ENCODE measurements at regions of chr6 and their contacts with region 1.

Region 1: DNA sequence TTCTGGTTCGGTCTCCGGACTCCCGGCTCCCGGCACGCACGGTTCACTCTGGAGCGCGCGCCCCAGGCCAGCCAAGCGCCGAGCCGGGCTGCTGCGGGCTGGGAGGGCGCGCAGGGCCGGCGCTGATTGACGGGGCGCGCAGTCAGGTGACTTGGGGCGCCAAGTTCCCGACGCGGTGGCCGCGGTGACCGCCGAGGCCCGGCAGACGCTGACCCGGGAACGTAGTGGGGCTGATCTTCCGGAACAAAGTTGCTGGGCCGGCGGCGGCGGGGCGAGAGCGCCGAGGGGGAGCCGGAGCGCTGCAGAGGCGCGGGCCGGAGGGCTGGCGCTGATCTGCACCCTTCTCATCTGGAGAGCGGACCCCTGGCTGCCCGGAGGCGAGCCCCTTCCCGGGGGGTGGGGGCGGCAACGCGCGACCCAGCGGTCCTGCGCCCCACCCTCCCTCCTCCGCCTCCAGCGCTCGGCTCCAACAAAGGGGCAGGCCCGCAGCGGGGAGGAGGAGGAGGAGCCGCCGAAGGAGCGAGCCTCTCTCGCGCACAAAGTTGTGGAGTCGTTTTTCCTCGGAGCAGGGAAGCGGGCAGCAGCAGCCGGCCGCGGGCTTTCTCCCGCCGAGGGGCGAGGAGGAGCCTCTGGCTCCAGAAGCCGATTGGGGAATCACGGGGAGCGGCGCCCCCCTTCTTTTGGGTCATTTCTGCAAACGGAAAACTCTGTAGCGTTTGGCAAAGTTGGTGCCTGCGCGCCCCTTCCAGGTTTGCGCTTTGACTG is at the start of gene UTRN:
- DNase-seq: peak; percentile 84
- H3K4me3 Mint-ChIP-seq: peak within 1 kb of the TSS; percentile 91
- H3K27ac Mint-ChIP-seq: peak within 1 kb of the TSS; percentile 88
- H3K4me1 Mint-ChIP-seq: peaks cover 16% of the 10 kb centered on the region
- H3K27me3 Mint-ChIP-seq: peaks cover 39% of the 10 kb centered on the region
- total RNA-seq, gene UTRN: 36.7 and 45.1 TPM in 2 replicates

Region 2: DNA sequence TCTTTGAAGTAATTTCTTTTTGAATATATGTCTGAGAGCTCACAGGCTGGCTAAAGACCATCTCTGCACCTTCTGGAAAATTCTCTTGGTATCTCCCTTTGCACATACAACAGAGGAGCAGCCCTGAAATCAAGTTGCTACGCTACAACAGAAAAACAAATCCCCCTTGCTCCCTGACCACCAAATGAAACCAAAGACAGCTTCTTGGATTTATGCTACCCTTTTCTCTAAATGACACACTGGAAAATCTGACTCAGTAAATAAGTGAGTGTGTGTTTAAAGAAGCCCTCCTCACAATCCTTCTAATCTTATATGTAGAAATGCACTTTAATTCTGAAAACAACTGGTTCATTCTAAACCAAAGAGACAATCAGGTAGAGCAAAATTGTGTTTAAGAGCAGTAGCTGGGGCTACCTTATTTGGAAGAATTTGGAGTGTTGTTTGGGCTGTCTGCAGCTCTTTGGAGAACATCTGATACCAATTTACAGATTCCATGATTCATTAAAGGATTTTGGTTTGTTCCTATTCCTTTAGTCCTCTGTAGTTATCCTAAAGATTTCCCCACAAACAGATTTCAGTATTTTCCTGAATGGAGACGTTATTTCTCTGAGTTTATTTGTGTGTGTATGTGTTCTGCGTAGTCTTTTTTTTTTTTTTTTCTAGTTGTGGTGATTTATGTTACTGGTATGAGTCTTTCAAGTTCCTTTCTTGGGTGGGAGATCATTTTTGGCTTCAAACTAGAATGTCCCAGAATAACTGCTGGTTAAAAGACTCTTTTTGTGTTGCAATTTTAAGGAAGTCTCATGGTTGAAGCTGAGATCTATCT is 36.3 kb before region 1 on chr6:
- intact Hi-C with region 1: loop called (anchors 1 kb)
- DNase-seq: peak; percentile 60
- H3K4me3 Mint-ChIP-seq: no peak overlapping the region
- H3K27ac Mint-ChIP-seq: peak overlapping the region; percentile 58
- H3K4me1 Mint-ChIP-seq: peaks cover 14% of the 10 kb centered on the region
- H3K27me3 Mint-ChIP-seq: peaks cover 6% of the 10 kb centered on the region

Region 3: DNA sequence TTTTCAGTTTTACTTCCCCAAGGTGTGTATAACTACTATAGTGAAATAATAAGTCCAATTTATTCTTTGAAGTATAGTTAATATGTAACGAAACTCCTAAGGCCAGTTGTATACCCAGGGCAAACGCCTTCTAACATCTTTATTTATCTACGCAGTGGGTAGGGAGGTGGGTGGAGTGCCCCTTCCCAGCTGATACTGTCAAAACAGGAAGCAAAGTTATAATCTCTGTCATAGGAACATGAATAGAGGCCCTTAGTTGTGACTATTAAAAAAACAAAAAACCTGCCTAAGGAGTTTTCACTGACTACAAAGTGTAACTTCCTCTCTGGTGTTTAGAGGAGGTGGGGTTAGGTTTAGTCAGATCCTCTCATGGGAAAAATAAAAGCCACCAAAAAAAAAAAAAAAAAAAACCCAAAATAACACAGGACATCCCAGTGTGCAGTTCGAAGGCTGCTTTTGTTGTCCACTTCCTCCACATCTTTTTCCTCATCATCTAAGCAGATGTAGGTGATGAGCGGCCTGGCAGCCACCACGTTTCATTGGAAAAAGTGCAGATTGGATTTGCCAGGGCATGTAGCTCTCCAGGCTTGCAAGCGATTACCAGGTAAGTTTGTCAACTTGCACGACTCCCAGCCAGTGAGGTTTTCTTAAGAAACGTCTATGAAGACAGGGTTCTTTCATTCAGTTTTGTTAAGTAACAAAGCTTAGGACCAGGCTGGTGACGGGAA is 58.9 kb after region 1 on chr6:
- intact Hi-C with region 1: loop called (anchors 2 kb)
- DNase-seq: peak; percentile 84
- H3K4me3 Mint-ChIP-seq: peak overlapping the region; percentile 89
- H3K27ac Mint-ChIP-seq: peak overlapping the region; percentile 96
- H3K4me1 Mint-ChIP-seq: peaks cover 59% of the 10 kb centered on the region
- H3K27me3 Mint-ChIP-seq: no peaks in the 10 kb centered on the region

Region 4: DNA sequence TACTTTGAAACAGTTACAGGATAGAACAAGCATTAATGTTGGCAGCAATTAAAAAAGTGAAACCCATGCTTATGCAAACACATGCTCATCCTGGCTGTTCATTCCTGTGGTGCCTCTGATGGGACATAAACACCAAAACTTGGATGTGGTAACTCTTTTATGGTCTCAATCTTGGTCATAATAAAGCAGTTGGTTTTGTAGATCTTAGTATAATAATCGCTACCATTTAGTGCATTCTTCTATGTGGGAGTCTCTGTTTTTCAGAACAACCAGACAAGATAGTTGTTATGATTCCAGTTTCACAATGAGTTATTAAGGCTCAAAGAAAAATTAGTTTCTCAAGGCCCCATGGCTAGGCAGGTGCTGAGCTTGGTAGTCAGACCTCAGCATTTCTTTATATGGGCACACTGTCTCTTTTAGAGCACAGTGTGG is 184.2 kb after region 1 on chr6:
- intact Hi-C with region 1: loop called (anchors 2 kb)
- DNase-seq: no peak
- H3K4me3 Mint-ChIP-seq: peak overlapping the region; percentile 74
- H3K27ac Mint-ChIP-seq: peak overlapping the region; percentile 90
- H3K4me1 Mint-ChIP-seq: peaks cover 22% of the 10 kb centered on the region
- H3K27me3 Mint-ChIP-seq: no peaks in the 10 kb centered on the region

Region 5: GRCh38 chr6:144482142-144482541 is 197.2 kb after region 1 on chr6:
- intact Hi-C with region 1: loop called (anchors 5 kb)
- DNase-seq: peak; percentile 89
- H3K4me3 Mint-ChIP-seq: no peak overlapping the region
- H3K27ac Mint-ChIP-seq: no peak overlapping the region
- H3K4me1 Mint-ChIP-seq: peaks cover 9% of the 10 kb centered on the region
- H3K27me3 Mint-ChIP-seq: no peaks in the 10 kb centered on the region

Measured in activated CD4-positive, alpha-beta T cell treated with anti-CD3 and anti-CD28 coated beads, Interleukin-2, amount 10 ng/mL, durations not matched to agents 24 days and 14 days (primary cell).